Lower leg skin (tissue), 4 donors: ENCODE measurements at regions of chr1 and their contacts with region 1.

Region 1: DNA sequence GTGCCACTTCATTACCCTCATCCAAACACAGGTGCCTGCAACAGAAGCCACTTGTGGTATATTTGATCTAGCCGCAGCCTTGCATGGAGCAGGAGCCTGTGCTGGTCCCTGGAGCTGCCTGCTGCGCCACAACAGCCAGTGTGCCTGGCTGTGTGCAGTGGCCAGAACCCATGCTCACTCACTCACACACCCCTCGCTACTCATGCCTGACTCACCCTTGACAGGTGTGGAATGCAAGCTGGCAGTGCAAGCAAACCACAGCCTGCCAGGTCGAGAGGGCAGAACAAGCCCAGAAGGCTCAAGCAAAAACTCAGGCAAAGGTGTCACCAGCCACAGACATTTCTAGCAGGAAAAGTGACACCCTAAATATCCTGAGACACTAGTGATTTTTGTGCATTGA is 1510.9 kb downstream of the KCNT2 start:
- DNase-seq: no peak
- H3K4me3 ChIP-seq: no peak overlapping the region
- CTCF ChIP-seq: no peak
- POLR2A ChIP-seq: no peak

Region 2: GRCh38 chr1:194289569-194290266 is 807.6 kb before region 1 on chr1:
- intact Hi-C with region 1: loop called (anchors 5 kb)
- DNase-seq: no peak
- H3K4me3 ChIP-seq: no peak overlapping the region
- CTCF ChIP-seq: no peak
- POLR2A ChIP-seq: no peak

Region 3: DNA sequence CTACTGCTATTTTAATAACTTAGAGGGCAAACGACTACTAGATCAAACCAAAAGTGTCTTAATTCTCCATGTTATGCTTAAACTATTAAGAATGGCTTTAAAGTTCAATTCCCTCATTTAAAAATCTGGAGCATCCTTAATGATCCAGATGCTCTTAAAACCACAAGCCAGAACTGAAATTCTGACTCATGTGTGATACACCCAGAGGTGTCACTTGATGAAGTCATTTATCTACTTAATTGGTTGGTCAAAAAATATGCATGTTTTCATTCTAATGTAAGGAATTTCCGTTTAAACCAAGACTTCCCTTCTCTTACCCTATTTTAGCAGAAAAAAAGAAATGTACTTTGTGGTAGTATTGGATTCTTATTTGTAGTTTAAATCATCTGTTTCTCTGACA is 649.7 kb before region 1 on chr1:
- intact Hi-C with region 1: no loop called
- DNase-seq: no peak
- H3K4me3 ChIP-seq: no peak overlapping the region
- CTCF ChIP-seq: no peak
- POLR2A ChIP-seq: no peak

Region 4: DNA sequence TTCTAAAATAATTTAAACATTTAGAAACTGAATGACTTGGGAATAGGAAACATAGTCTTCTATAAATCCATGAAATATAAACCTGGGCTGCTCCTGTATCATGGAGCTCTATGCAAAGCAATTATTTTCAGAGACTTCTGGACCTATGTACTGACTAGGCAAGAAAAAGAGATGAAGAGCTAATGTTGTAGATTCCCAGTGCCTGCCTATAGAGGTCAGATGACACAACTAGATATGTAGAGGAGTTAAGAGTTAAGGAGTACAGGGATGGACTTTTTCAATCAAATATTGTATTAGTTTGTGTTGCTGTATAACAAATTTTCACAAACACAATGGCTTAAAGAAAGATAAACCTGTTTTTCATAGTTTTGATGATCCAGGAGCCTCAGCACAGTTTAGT is 76.4 kb after region 1 on chr1:
- intact Hi-C with region 1: no loop called
- DNase-seq: no peak
- H3K4me3 ChIP-seq: no peak overlapping the region
- CTCF ChIP-seq: no peak
- POLR2A ChIP-seq: no peak